ENCODE measurements at regions of chr18 and their contacts with region 1.

Region 1: DNA sequence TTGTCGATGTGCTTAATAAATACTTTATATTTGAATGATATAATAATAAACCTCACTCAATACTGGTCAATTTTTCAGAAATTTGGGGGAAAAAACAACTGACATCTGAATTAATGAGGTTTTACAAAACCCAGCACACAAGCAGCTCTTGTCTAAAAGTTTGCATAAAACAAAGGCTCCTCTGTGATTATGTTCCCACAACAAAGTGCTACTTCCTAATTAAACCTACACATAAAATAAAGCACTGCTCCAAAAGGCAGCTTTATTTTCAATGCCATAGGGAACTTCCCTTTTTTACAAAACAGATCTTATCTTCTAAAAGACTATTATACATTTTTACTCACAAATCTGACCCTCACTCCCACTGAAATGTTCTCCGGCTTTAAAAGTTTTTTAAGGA is 47.1 kb downstream of the LAMA1 start:
- DNase-seq: no peak
- ATAC-seq: no peak
- H3K4me3 ChIP-seq: no peak overlapping the region
- H3K27ac ChIP-seq: no peak overlapping the region
- H3K4me1 ChIP-seq: no peaks in the 10 kb centered on the region
- H3K27me3 ChIP-seq: peaks cover 0 to 23% (median 5%) of the 10 kb centered on the region in 7 donors
- CTCF ChIP-seq: no peak

Region 2: GRCh38 chr18:7111134-7111533 is 40.7 kb after region 1 on chr18:
- intact Hi-C with region 1: loop called in 1 of 10 experiments (anchors 5 kb)
- DNase-seq: no peak
- ATAC-seq: no peak
- H3K4me3 ChIP-seq: no peak overlapping the region
- H3K27ac ChIP-seq: no peak overlapping the region
- H3K4me1 ChIP-seq: peaks cover 0 to 7% (median 3%) of the 10 kb centered on the region in 9 donors
- H3K27me3 ChIP-seq: peaks cover 0 to 86% (median 63%) of the 10 kb centered on the region in 7 donors
- CTCF ChIP-seq: no peak

Measured in heart right ventricle (tissue), 16 donors.